ENCODE measurements at regions of chr5 and their contacts with region 1.

Region 1: DNA sequence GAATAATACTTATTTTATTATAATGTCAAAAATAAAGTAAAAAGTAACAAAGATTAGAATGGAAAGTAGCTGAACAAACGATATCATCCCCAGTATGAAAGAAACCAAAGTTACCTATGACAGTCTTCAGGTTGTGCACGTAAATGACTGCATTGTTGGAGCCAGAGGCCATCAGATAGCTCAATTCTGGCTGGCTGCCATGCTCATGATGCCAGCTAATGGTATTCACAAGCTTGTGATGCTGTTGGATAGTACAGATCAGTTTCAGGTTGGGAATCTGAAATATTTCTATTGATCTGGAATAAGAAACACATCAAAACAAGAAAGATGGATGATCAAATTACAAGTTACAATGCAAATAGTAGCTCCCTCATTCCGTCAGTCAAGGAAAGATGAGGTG is 21.1 kb downstream of the GEMIN5 start:
- DNase-seq: no peak
- ATAC-seq: no peak
- H3K4me3 ChIP-seq: no peak overlapping the region
- H3K27ac ChIP-seq: no peak overlapping the region
- H3K4me1 ChIP-seq: no peaks in the 10 kb centered on the region
- H3K27me3 ChIP-seq: no peaks in the 10 kb centered on the region
- CTCF ChIP-seq: no peak
- POLR2A ChIP-seq: no peak
- RAD21 ChIP-seq: no peak

Region 2: GRCh38 chr5:154868702-154869101 is 48.2 kb before region 1 on chr5:
- CTCF ChIA-PET with region 1: no interaction called
- POLR2A ChIA-PET with region 1: no interaction called
- dilution Hi-C with region 1: no loop called
- in situ Hi-C with region 1: no loop called
- intact Hi-C with region 1: loop called (anchors 5 kb)
- DNase-seq: peak; percentile 8
- ATAC-seq: no peak
- H3K4me3 ChIP-seq: no peak overlapping the region
- H3K27ac ChIP-seq: no peak overlapping the region
- H3K4me1 ChIP-seq: peaks cover 3% of the 10 kb centered on the region
- H3K27me3 ChIP-seq: no peaks in the 10 kb centered on the region
- CTCF ChIP-seq: peak; percentile 19; the same call in 1 of the 2 replicates
- POLR2A ChIP-seq: no peak
- RAD21 ChIP-seq: peak; percentile 4; the same call in 1 of the 2 replicates

Measured in IMR-90 (cell line).